ENCODE measurements at regions of chr16 and their contacts with region 1.

Region 1: DNA sequence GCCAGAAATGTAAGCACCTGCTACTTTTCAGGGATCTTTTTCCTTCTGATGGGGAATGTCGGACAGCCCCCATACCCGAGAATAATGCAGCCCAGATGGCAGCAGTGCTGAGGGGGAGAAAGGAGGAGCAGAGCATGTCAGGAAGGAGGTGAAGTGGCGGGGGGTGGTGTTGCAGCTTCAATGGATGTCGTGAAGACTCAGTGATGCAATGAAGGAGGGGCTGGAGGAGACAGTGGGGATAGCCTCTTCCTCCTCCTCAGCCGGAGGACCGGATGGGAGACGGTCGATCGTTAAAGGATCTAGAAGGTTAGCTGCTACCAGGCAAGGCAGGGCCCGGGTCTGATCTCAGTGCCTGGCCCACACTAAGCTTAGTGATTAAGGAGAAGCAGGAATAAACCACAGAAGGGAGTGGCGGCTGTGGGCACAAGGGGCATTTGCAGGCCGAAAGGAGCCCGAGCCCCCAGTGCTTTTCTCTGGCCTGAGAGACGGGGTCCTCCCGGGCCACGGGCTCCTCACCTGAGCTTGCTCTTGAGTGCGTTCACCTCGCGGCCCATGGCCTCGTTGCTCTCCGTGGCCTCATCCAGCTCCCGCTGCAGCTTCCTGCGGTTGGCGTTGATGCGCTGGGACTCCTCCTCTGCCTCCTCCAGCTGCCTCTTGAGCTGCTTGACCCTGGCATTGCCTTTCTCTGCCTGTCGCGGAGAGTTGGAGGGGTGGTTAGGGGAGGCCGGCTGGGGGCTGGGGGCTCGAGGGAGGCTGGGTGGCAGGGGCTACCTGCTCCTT is 64.5 kb downstream of the NDE1 start:
- DNase-seq: no peak
- H3K4me3 ChIP-seq: no peak overlapping the region
- H3K27me3 ChIP-seq: no peaks in the 10 kb centered on the region
- CTCF ChIP-seq: no peak

Region 2: GRCh38 chr16:15631730-15632409 is 82.7 kb before region 1 on chr16:
- CTCF ChIA-PET with region 1: no interaction called
- POLR2A ChIA-PET with region 1: no interaction called
- DNase-seq: no peak
- H3K4me3 ChIP-seq: no peak overlapping the region
- H3K27me3 ChIP-seq: no peaks in the 10 kb centered on the region
- CTCF ChIP-seq: no peak

Region 3: DNA sequence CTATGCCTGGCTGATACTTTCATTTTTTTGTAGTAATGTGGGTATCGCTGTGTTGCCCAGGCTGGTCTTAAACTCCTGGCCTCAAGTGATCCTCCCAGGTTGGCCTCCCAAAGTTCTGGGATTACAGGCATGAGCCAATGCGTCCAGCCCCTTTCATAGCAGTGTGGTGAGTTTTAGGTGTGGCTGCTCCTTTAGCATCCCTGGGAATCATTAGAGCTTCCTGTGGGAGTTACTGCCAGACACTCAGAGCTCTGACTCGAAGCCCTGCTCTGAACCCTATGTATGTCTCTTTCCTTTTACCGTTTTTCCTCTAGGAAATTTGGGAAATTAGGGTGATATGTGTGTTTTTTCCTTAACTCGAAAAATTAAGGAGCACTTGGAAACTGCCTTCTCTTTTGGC is 20.1 kb before region 1 on chr16:
- CTCF ChIA-PET with region 1: no interaction called
- POLR2A ChIA-PET with region 1: no interaction called
- DNase-seq: no peak
- H3K4me3 ChIP-seq: no peak overlapping the region
- H3K27me3 ChIP-seq: no peaks in the 10 kb centered on the region
- CTCF ChIP-seq: no peak

Region 4: GRCh38 chr16:15704545-15704987 is 10.0 kb before region 1 on chr16:
- CTCF ChIA-PET with region 1: interaction called, 29 read pairs
- POLR2A ChIA-PET with region 1: no interaction called
- DNase-seq: no peak
- H3K4me3 ChIP-seq: no peak overlapping the region
- H3K27me3 ChIP-seq: no peaks in the 10 kb centered on the region
- CTCF ChIP-seq: peak; percentile 81

Measured in BJ (cell line).